ENCODE measurements at regions of chr3 and their contacts with region 1.

Region 1: DNA sequence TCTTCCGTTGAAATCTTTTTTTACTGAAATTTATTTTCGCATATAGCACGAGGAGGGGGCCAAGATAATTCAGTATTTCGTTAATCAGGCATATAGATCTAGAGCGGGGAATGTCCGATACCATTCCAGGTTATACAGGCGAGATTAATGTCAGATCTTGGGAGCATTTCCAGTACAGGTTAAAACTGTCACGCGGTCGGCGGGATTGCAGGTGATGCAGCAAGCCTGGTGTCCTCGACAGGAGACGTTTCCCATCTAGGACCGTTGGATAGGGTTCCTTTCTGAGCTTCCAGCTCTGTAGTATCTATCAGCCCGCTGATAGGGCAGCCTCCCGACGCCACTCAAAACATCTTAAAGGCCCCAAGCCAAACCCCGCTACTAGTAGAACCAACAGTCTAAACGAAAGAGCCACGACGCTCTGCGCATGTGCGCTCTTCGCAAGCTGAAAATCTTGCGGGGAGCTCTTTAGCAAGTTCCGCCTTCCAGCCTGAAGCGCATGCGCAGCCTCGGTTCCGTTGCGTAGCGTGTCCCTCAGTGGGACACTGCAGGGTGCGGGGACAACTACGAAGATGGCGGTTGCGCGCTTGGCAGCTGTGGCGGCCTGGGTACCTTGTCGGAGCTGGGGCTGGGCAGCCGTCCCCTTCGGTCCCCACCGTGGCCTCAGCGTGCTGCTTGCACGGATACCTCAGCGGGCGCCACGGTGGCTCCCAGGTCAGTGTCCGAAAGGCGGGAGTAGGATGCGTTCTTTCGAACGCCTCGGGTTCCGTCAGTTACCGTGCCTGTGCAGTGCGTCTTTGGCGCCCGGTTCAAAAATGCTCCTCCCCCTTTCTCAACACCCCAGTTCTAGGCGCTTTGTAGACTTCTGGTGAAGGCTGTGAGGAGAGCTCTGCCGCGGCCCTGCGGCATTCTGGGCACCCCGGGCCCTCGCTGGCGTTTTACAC is at the start of gene ABHD10:
- DNase-seq: peak; percentile 90 to 97 (median 93)
- ATAC-seq: peak; percentile 95
- H3K4me3 ChIP-seq: peak within 1 kb of the TSS; percentile 83
- H3K4me3 Mint-ChIP-seq: peak within 1 kb of the TSS; percentile 82 to 97 (median 92)
- H3K27ac ChIP-seq: peak within 1 kb of the TSS; percentile 75
- H3K27ac Mint-ChIP-seq: peak within 1 kb of the TSS; percentile 92 to 96 (median 94)
- H3K4me1 ChIP-seq: peaks cover 16 to 24% of the 10 kb centered on the region in 2 donors
- H3K4me1 Mint-ChIP-seq: peaks cover 19 to 54% (median 44%) of the 10 kb centered on the region in 7 donors
- H3K27me3 ChIP-seq: no peaks in the 10 kb centered on the region
- H3K27me3 Mint-ChIP-seq: peaks cover 0 to 25% (median 0%) of the 10 kb centered on the region in 5 donors
- total RNA-seq, gene ABHD10: 18.4 to 43.6 (median 34.9) TPM

Region 2: DNA sequence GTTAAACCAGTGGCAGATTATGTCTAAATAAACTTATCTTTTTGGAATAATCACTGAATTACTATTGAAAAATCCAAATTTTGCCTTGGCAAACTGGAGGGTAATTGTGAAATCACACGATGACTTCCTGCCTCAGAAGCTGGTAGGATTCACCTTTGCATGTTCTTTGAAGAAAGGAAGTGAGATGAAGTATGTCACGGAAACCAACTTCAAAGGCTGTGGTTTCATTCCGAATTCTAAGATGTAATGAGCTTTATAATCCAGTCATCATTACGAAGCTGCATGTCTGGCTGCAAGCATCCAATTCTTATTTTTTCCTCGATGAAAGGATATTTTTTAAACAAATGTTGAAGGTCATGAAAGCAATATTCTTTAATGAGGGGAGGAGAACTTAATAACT is 368.6 kb before region 1 on chr3:
- CTCF ChIA-PET with region 1: no interaction called
- POLR2A ChIA-PET with region 1: no interaction called
- intact Hi-C with region 1: loop called in 1 of 2 experiments (anchors 2 kb)
- DNase-seq: peak in 7 of 9 donors; percentile 79 to 91 (median 89)
- ATAC-seq: peak; percentile 94
- H3K4me3 ChIP-seq: peak overlapping the region; percentile 2
- H3K4me3 Mint-ChIP-seq: peak overlapping the region; percentile 48 to 84 (median 74)
- H3K27ac ChIP-seq: peak overlapping the region; percentile 47
- H3K27ac Mint-ChIP-seq: peak overlapping the region; percentile 41 to 96 (median 90)
- H3K4me1 ChIP-seq: peaks cover 27 to 38% of the 10 kb centered on the region in 2 donors
- H3K4me1 Mint-ChIP-seq: peaks cover 32 to 90% (median 61%) of the 10 kb centered on the region in 7 donors
- H3K27me3 ChIP-seq: no peaks in the 10 kb centered on the region
- H3K27me3 Mint-ChIP-seq: no peaks in the 10 kb centered on the region

Region 3: GRCh38 chr3:111989061-111989678 is 10.4 kb after region 1 on chr3:
- CTCF ChIA-PET with region 1: interaction called, 22 read pairs
- POLR2A ChIA-PET with region 1: interaction called, 12 read pairs
- intact Hi-C with region 1: loop called (anchors 1 kb)
- DNase-seq: peak in 3 of 9 donors; percentile 21 to 32 (median 32)
- ATAC-seq: peak; percentile 87
- H3K4me3 ChIP-seq: no peak overlapping the region
- H3K4me3 Mint-ChIP-seq: no peak overlapping the region
- H3K27ac ChIP-seq: no peak overlapping the region
- H3K27ac Mint-ChIP-seq: peak overlapping the region in 1 of 9 donors; percentile 30
- H3K4me1 ChIP-seq: no peaks in the 10 kb centered on the region
- H3K4me1 Mint-ChIP-seq: peaks cover 11 to 44% (median 35%) of the 10 kb centered on the region in 7 donors
- H3K27me3 ChIP-seq: no peaks in the 10 kb centered on the region
- H3K27me3 Mint-ChIP-seq: no peaks in the 10 kb centered on the region

Region 4: GRCh38 chr3:112013058-112013783 is 34.5 kb after region 1 on chr3:
- CTCF ChIA-PET with region 1: interaction called, 8 read pairs
- POLR2A ChIA-PET with region 1: interaction called, 13 read pairs
- intact Hi-C with region 1: no loop called
- DNase-seq: peak in 8 of 9 donors; percentile 30 to 63 (median 55)
- ATAC-seq: peak; percentile 88
- H3K4me3 ChIP-seq: no peak overlapping the region
- H3K4me3 Mint-ChIP-seq: peak overlapping the region in 4 of 10 donors; percentile 24 to 70 (median 26)
- H3K27ac ChIP-seq: no peak overlapping the region
- H3K27ac Mint-ChIP-seq: peak overlapping the region in 2 of 9 donors; percentile 42 to 83
- H3K4me1 ChIP-seq: no peaks in the 10 kb centered on the region
- H3K4me1 Mint-ChIP-seq: peaks cover 0 to 20% (median 10%) of the 10 kb centered on the region in 7 donors
- H3K27me3 ChIP-seq: no peaks in the 10 kb centered on the region
- H3K27me3 Mint-ChIP-seq: no peaks in the 10 kb centered on the region

Region 5: DNA sequence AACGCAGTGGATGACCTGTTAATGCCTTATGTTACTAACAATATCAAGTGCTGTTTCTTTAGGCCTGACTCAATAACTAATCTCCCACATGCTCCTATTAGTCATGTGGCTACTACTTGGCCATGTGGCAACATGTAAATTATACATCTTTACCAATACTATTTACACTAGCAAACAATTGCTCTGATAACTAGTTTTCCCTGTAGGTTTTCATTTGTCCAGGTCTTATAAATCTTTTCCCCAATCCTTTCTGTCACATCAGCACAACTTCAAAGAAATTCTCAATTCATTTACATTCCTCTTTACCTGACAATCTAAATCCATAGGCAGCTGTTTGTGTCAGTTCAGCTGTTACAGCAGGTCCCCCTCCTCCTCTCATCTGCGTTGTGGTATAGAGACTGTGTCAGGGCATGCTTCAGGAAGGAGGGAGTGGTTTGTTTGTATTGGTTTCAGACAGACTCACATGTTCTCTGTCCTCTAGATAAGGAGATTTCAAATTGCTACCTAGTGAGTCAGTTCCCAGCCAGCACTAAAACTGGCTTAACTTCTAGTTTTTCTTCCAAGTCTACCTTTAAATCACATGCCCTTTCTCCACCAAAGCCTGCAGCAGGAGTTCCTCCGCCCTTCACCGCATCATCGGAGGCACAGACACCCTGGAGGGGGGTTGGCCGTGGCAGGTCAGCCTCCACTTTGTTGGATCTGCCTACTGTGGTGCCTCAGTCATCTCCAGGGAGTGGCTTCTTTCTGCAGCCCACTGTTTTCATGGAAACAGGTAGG is 96.1 kb after region 1 on chr3:
- CTCF ChIA-PET with region 1: no interaction called
- POLR2A ChIA-PET with region 1: interaction called, 11 read pairs
- intact Hi-C with region 1: loop called in 1 of 2 experiments (anchors 1 kb)
- DNase-seq: peak in 8 of 9 donors; percentile 29 to 60 (median 52)
- ATAC-seq: peak; percentile 88
- H3K4me3 ChIP-seq: no peak overlapping the region
- H3K4me3 Mint-ChIP-seq: peak overlapping the region; percentile 32 to 76 (median 56)
- H3K27ac ChIP-seq: peak overlapping the region; percentile 32
- H3K27ac Mint-ChIP-seq: peak overlapping the region; percentile 72 to 95 (median 85)
- H3K4me1 ChIP-seq: peaks cover 4 to 17% of the 10 kb centered on the region in 2 donors
- H3K4me1 Mint-ChIP-seq: peaks cover 17 to 57% (median 51%) of the 10 kb centered on the region in 7 donors
- H3K27me3 ChIP-seq: no peaks in the 10 kb centered on the region
- H3K27me3 Mint-ChIP-seq: peaks cover 0 to 3% (median 0%) of the 10 kb centered on the region in 5 donors

Region 6: DNA sequence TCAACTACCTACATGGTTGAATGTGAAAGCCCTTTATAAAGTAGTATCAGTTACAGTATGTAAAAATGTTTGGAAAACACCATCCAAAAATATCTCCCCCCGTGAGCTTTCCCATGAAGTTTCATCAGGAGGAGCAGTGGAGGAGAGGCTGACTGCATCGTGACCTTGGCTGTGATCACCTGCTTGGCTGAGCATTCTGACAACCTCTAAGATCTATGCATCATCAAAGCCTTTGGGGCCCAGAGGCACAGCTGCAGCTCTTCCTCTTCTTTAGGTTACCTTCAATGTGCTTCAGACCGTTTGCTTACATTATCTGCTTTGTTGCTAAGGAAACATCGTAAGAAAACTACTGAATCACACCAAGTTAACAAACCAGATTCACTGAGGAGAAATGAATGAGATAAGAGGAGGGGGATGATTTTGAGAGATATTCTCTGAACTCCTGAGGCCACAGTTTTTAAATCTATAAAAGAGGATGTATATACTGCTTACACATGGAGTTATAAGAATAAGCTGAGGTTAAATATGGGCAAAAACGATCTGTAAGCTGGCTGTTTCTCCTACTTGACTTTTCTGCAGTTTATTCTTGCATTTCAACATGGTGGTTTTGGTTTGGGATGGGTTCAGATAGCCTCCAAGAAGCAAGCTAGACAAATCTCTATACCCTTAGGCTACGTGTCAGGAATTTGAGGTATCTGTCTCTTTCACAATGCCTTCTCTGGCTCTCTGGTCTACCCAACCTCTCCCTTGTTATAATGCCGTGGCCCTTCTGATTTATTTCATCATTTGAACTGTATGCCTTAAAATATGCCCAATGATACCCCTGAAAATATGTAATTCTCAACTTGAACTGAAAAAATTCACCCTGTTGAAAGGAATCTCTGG is 150.3 kb after region 1 on chr3:
- CTCF ChIA-PET with region 1: no interaction called
- POLR2A ChIA-PET with region 1: interaction called, 3 read pairs
- intact Hi-C with region 1: loop called (anchors 2 kb)
- DNase-seq: peak in 8 of 9 donors; percentile 39 to 88 (median 83)
- ATAC-seq: peak; percentile 82
- H3K4me3 ChIP-seq: no peak overlapping the region
- H3K4me3 Mint-ChIP-seq: peak overlapping the region; percentile 23 to 100 (median 64)
- H3K27ac ChIP-seq: peak overlapping the region; percentile 82
- H3K27ac Mint-ChIP-seq: peak overlapping the region; percentile 87 to 95 (median 93)
- H3K4me1 ChIP-seq: peaks cover 41 to 72% of the 10 kb centered on the region in 2 donors
- H3K4me1 Mint-ChIP-seq: peaks cover 49 to 92% (median 90%) of the 10 kb centered on the region in 7 donors
- H3K27me3 ChIP-seq: no peaks in the 10 kb centered on the region
- H3K27me3 Mint-ChIP-seq: no peaks in the 10 kb centered on the region

Region 7: GRCh38 chr3:112303764-112304325 is 325.1 kb after region 1 on chr3:
- CTCF ChIA-PET with region 1: no interaction called
- POLR2A ChIA-PET with region 1: no interaction called
- intact Hi-C with region 1: loop called in 1 of 2 experiments (anchors 10 kb)
- DNase-seq: peak in 7 of 9 donors; percentile 34 to 59 (median 43)
- ATAC-seq: peak; percentile 75
- H3K4me3 ChIP-seq: peak overlapping the region; percentile 82
- H3K4me3 Mint-ChIP-seq: no peak overlapping the region
- H3K27ac ChIP-seq: peak overlapping the region; percentile 61
- H3K27ac Mint-ChIP-seq: no peak overlapping the region
- H3K4me1 ChIP-seq: peaks cover 5 to 18% of the 10 kb centered on the region in 2 donors
- H3K4me1 Mint-ChIP-seq: peaks cover 0 to 3% (median under 1%) of the 10 kb centered on the region in 7 donors
- H3K27me3 ChIP-seq: no peaks in the 10 kb centered on the region
- H3K27me3 Mint-ChIP-seq: no peaks in the 10 kb centered on the region